Psoas muscle (tissue), 8 donors: ENCODE measurements at regions of chr20 and their contacts with region 1.

Region 1: DNA sequence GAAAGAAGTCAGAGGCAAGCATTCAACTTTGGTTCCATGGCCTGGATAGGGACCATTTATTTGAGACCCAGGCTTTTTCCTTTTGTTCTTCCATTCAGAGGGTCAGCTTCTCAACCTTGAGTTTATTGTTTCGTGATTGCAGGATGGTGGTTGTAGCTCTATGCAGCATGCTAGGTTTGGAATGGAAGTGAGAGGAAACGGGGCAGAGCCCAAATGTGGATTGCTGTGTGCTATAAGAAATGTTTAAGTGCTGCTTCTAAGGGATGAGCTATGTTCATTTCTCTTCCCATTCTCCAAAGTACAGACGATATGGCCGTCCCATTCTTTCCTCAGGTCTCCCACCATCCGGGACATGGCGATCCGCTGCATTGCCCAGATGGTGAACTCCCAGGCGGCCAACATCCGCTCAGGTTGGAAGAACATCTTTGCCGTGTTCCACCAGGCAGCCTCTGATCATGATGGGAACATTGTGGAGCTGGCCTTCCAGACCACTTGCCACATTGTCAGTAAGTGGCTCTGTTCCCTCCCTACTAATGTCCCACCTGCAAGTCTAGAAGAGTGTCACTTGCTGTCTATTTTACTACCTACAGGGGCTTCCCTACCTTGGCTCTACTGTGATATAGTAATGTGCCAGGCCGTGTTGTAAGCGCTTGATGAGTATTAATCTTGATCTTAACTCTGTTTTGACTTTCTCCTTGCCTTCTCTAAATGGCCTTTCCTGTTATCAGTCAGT is 36.0 kb upstream of the CSE1L start:
- DNase-seq: no peak
- ATAC-seq: no peak
- H3K4me3 ChIP-seq: no peak overlapping the region
- H3K27ac ChIP-seq: no peak overlapping the region
- H3K4me1 ChIP-seq: no peaks in the 10 kb centered on the region
- H3K27me3 ChIP-seq: no peaks in the 10 kb centered on the region
- CTCF ChIP-seq: no peak

Region 2: GRCh38 chr20:48866502-48867335 is 143.3 kb before region 1 on chr20:
- intact Hi-C with region 1: no loop called
- DNase-seq: no peak
- ATAC-seq: no peak
- H3K4me3 ChIP-seq: no peak overlapping the region
- H3K27ac ChIP-seq: no peak overlapping the region
- H3K4me1 ChIP-seq: no peaks in the 10 kb centered on the region
- H3K27me3 ChIP-seq: peaks cover 0 to 2% (median 0%) of the 10 kb centered on the region in 3 donors
- CTCF ChIP-seq: no peak

Region 3: GRCh38 chr20:48921151-48921898 is 88.7 kb before region 1 on chr20 and contains the start of gene ARFGEF2:
- intact Hi-C with region 1: no loop called
- DNase-seq: peak; percentile 93 to 96
- ATAC-seq: peak; percentile 96 to 97 (median 97)
- H3K4me3 ChIP-seq: peak within 1 kb of the TSS; percentile 77
- H3K27ac ChIP-seq: peak within 1 kb of the TSS; percentile 95
- H3K4me1 ChIP-seq: peaks cover 37% of the 10 kb centered on the region
- H3K27me3 ChIP-seq: no peaks in the 10 kb centered on the region
- CTCF ChIP-seq: no peak
- total RNA-seq, gene ARFGEF2: 21.3 to 36.1 (median 23.4) TPM

Region 4: GRCh38 chr20:49078296-49078695 is 68.2 kb after region 1 on chr20:
- intact Hi-C with region 1: loop called (anchors 5 to 10 kb)
- DNase-seq: no peak
- ATAC-seq: no peak
- H3K4me3 ChIP-seq: no peak overlapping the region
- H3K27ac ChIP-seq: no peak overlapping the region
- H3K4me1 ChIP-seq: no peaks in the 10 kb centered on the region
- H3K27me3 ChIP-seq: no peaks in the 10 kb centered on the region
- CTCF ChIP-seq: no peak

Region 5: DNA sequence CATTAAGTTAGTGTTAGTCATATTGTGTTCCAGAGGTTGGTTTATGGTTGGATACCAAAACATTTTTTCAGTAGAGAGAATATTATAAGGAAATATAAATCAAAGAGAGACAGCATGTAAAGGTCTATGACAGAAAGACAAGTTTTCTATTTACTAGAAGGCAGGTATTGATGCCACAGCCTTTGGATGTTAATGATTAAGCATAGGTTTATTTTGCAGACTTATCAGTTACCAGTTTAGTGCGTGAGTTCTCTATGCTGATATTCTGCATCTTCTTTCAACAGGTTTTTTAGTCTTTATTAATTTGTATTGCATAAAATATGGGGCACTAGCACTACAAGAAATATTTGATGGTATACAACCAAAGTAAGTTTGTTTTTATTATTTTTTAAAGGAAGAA is 81.7 kb after region 1 on chr20:
- intact Hi-C with region 1: loop called in 1 of 2 experiments (anchors 5 kb)
- DNase-seq: no peak
- ATAC-seq: no peak
- H3K4me3 ChIP-seq: no peak overlapping the region
- H3K27ac ChIP-seq: no peak overlapping the region
- H3K4me1 ChIP-seq: no peaks in the 10 kb centered on the region
- H3K27me3 ChIP-seq: no peaks in the 10 kb centered on the region
- CTCF ChIP-seq: no peak

Region 6: GRCh38 chr20:49216991-49217578 is 207.0 kb after region 1 on chr20:
- intact Hi-C with region 1: loop called in 1 of 2 experiments (anchors 10 kb)
- DNase-seq: peak; percentile 91 to 96
- ATAC-seq: peak; percentile 56 to 71 (median 66)
- H3K4me3 ChIP-seq: no peak overlapping the region
- H3K27ac ChIP-seq: no peak overlapping the region
- H3K4me1 ChIP-seq: peaks cover 3% of the 10 kb centered on the region
- H3K27me3 ChIP-seq: no peaks in the 10 kb centered on the region
- CTCF ChIP-seq: peak; percentile 91

Region 7: DNA sequence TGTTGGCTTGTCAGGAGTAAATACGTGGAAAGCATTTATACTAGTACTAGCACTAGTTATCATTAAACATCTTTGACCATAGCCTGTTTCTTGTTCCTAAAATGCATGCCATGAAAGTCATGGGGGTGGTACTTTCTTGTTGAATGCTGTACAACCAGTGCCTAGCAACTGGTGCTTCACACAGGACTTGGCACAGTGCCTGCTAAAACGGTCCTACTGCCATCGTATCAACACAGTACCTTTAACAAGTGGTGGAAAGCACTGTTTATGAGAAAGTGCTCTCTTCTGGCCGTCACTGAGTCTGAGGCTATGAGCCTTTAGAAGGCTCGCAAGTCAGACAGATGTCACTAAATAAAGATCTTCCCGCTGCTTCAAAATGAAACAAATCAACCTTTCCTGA is 246.2 kb after region 1 on chr20:
- intact Hi-C with region 1: loop called in 1 of 2 experiments (anchors 10 kb)
- DNase-seq: no peak
- ATAC-seq: no peak
- H3K4me3 ChIP-seq: no peak overlapping the region
- H3K27ac ChIP-seq: no peak overlapping the region
- H3K4me1 ChIP-seq: no peaks in the 10 kb centered on the region
- H3K27me3 ChIP-seq: no peaks in the 10 kb centered on the region
- CTCF ChIP-seq: no peak